ENCODE measurements at regions of chr19 and their contacts with region 1.

Region 1: DNA sequence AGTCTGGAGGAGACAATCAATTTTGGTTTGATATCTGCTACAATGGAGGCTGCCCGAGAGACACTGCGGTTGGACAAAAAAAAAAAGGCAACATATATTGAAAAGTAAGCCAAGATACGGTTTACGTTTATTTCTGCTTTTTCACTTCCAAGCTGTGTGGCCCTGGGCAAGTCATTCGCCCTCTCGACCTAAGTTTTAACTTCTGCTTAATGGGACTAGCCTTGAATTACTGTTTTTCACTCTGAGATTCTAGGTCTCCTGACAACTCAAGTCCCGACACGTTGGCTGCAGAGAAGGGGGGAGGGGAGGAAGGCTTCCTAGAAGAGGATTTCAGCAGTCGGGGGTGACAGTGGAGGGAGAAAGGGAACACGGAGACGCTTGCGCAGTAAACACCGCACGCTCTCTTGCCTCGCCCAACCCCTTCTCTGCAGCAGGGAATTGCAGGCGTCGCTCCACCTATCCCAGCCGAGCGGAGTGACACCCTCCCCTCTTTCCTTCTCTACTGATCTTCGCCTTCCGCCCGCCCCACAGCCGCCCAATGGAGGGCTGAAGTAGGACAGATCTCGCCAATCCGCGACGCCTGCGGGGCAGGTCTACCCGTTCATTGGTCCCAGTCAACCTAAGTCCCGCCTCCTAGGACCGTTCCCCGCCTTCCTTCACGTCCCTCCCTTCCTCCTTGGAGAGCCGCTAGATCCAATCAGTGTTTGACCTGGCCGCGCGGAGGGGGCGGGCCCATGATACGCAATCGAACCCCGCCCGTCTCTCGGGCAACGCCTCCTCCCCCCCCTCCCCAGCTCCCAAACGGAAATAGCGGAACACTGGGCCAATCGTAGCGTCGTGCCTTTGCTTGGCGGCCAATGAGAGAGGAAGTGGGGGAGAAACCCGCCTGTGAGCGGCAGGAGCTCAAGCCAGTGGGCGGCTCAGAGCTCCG is 529 bp upstream of the AP2A1 start:
- DNase-seq: peak; percentile 100
- H3K4me3 Mint-ChIP-seq: peak overlapping the region; percentile 91
- H3K27ac Mint-ChIP-seq: peak overlapping the region; percentile 92
- H3K4me1 Mint-ChIP-seq: peaks cover 32% of the 10 kb centered on the region
- H3K27me3 Mint-ChIP-seq: no peaks in the 10 kb centered on the region

Region 2: GRCh38 chr19:49690656-49691242 is 75.5 kb before region 1 on chr19 and contains the start of gene CPT1C:
- intact Hi-C with region 1: loop called (anchors 2 kb)
- DNase-seq: peak; percentile 88
- H3K4me3 Mint-ChIP-seq: peak within 1 kb of the TSS; percentile 87
- H3K27ac Mint-ChIP-seq: peak within 1 kb of the TSS; percentile 63
- H3K4me1 Mint-ChIP-seq: peaks cover 19% of the 10 kb centered on the region
- H3K27me3 Mint-ChIP-seq: peaks cover 13% of the 10 kb centered on the region
- total RNA-seq, gene CPT1C: 3.4 and 3.6 TPM in 2 replicates

Region 3: DNA sequence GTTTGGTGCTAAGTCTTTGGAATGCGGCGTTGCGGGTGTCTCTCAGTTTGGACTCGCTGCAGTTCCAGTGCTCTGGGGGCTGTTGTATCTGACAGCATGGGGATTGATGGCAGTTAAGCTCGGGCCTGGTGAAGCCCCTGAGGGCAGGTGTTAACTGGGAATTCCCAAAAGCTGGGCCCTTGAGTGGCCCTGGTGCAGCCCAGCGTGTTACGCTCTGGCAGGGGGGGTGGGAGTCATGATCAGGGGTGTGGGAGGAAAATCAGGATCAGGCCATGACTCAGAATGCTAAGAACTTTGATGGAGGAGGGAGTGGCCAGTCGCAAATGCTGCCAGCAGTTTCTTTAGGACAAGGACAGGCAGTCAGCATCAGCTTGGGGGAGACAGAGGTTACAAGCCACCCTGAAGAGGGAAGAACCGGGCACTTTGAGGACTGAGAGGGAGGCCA is 20.1 kb after region 1 on chr19:
- intact Hi-C with region 1: no loop called
- DNase-seq: no peak
- H3K4me3 Mint-ChIP-seq: no peak overlapping the region
- H3K27ac Mint-ChIP-seq: no peak overlapping the region
- H3K4me1 Mint-ChIP-seq: peaks cover 5% of the 10 kb centered on the region
- H3K27me3 Mint-ChIP-seq: no peaks in the 10 kb centered on the region

Region 4: DNA sequence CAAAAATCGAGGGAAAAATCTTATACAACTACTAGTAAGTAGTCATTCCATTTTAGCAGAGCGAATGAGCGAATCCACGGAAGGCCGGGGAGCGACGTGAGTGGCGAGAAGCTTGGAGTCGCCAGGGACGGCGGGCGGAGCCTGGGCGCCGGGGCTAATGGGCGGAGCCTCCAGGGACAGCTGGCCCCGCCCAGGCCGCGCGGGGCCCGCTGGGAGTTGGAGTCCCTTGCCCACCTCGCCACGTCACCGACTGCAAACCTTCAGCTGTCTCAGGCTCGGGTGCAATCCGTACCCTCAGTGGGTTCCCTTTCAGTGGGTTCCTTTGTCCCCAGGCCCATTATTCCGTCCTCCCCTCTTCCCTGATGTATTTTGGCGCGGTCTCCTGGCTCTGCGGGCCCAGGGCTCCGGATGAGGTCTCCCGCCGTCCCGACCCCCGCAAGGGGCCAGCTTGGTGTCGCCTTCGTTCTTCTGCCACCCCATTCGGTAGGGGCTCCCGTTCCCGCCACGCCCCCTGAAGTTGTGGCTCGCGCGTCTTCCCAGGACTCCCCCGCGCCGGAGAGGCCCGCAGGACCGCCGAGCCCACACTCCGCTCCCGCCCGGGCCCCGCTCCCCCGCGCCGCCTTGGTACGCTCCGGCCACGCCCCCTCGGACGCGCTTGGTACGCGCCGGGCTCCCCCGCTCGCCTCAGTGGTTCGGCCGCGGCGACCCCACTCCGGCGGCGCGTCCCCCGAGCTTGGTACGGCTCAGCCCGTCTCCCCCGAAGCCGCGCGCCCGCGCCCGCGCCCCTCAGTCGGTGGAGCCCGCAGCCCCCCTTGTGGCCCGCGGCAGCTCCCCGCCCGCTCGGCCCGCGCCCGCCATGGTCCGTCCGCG is 84.4 kb after region 1 on chr19 and contains the start of gene PTOV1:
- intact Hi-C with region 1: loop called (anchors 5 kb)
- DNase-seq: peak; percentile 98
- H3K4me3 Mint-ChIP-seq: peak within 1 kb of the TSS; percentile 91
- H3K27ac Mint-ChIP-seq: peak within 1 kb of the TSS; percentile 96
- H3K4me1 Mint-ChIP-seq: peaks cover 38% of the 10 kb centered on the region
- H3K27me3 Mint-ChIP-seq: peaks cover 4% of the 10 kb centered on the region
- total RNA-seq, gene PTOV1: 121 and 124 TPM in 2 replicates

Region 5: GRCh38 chr19:49906879-49907564 is 140.8 kb after region 1 on chr19:
- intact Hi-C with region 1: no loop called
- DNase-seq: no peak
- H3K4me3 Mint-ChIP-seq: no peak overlapping the region
- H3K27ac Mint-ChIP-seq: no peak overlapping the region
- H3K4me1 Mint-ChIP-seq: peaks cover 51% of the 10 kb centered on the region
- H3K27me3 Mint-ChIP-seq: no peaks in the 10 kb centered on the region

Measured in activated CD4-positive, alpha-beta T cell treated with anti-CD3 and anti-CD28 coated beads, Interleukin-2, amount 10 ng/mL, durations not matched to agents 24 days and 14 days (primary cell).